Naive thymus-derived CD4-positive, alpha-beta T cell (primary cell): ENCODE measurements at regions of chr3 and their contacts with region 1.

Region 1: DNA sequence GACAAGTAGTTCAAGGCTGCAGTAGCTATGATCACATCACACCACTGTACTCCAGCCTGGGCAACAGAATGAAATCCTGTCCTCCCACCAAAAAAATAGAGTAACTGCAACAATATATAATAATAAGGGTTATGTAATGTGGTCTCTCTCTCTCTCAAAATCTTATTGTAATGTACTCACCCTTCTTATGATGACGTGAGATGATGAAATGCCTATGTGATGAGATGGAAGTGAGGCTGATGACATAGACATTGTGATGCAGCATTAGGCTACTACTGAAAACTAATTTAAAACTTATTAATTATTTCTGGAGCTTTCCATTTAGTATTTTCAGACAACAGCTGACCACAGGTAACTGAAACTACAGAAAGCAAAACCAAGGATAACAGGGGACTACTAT is 27.4 kb downstream of the TASOR start:
- DNase-seq: no peak
- ATAC-seq: no peak
- H3K4me3 ChIP-seq: no peak overlapping the region
- H3K4me3 Mint-ChIP-seq: no peak overlapping the region
- H3K27ac ChIP-seq: no peak overlapping the region
- H3K27ac Mint-ChIP-seq: peak overlapping the region in 4 of 9 donors; percentile 6 to 36 (median 28)
- H3K4me1 ChIP-seq: no peaks in the 10 kb centered on the region
- H3K4me1 Mint-ChIP-seq: peaks cover 20 to 54% (median 42%) of the 10 kb centered on the region in 7 donors
- H3K27me3 ChIP-seq: no peaks in the 10 kb centered on the region
- H3K27me3 Mint-ChIP-seq: no peaks in the 10 kb centered on the region

Region 2: DNA sequence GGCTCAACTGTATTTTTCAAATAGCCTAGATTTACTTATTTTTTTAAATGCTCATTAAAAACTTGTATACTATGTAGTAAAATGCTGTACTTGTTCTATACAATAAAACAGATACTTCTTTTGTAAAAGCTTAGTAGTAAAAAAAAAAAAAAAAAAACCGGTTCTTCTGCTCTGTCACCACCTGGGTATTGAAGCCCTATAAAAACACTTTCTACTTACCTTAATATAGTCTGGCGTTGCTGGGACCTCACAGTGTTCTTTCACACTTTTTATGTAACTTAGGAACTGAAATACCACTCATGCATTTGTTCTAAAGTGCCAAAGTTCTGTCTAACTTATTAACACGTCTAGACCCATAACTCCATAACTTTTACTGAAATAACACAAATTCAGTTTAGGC is 34.0 kb before region 1 on chr3:
- CTCF ChIA-PET with region 1: no interaction called
- POLR2A ChIA-PET with region 1: interaction called, 3 read pairs
- intact Hi-C with region 1: loop called in 1 of 2 experiments (anchors 1 kb)
- DNase-seq: no peak
- ATAC-seq: no peak
- H3K4me3 ChIP-seq: no peak overlapping the region
- H3K4me3 Mint-ChIP-seq: no peak overlapping the region
- H3K27ac ChIP-seq: no peak overlapping the region
- H3K27ac Mint-ChIP-seq: peak overlapping the region in 5 of 9 donors; percentile 29 to 84 (median 50)
- H3K4me1 ChIP-seq: no peaks in the 10 kb centered on the region
- H3K4me1 Mint-ChIP-seq: peaks cover 4 to 16% (median 9%) of the 10 kb centered on the region in 7 donors
- H3K27me3 ChIP-seq: no peaks in the 10 kb centered on the region
- H3K27me3 Mint-ChIP-seq: no peaks in the 10 kb centered on the region

Region 3: DNA sequence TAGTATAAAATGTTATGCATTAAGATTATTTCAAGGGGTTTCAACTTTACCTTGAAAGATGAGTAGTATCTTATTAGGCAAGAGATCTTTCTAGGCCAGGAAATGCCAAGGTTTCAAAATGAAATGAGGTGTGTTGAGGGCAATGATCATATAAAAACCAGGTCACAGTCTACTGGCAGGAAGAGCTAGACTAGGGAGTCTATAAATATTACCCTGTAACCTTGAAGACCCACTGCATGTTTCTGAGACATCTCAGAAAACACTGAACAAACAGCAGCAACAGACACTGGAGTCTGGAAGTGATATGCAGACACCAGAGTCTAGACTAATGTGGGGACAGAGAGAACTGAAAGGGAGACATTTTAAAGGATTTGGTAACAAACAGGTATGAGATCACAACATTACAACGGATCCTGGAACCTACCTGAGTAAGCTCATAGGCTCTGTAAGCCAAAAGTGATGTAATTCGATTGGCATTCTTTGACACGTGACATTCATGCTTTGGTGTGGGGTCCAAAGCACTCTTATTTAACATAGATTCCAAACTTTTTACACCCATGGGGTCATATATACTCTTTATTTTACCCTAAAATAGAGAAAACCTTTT is 12.4 kb after region 1 on chr3:
- CTCF ChIA-PET with region 1: no interaction called
- POLR2A ChIA-PET with region 1: interaction called, 4 read pairs
- intact Hi-C with region 1: loop called in 1 of 2 experiments (anchors 2 kb)
- DNase-seq: no peak
- ATAC-seq: no peak
- H3K4me3 ChIP-seq: no peak overlapping the region
- H3K4me3 Mint-ChIP-seq: peak overlapping the region in 2 of 10 donors; percentile 49 to 58
- H3K27ac ChIP-seq: no peak overlapping the region
- H3K27ac Mint-ChIP-seq: peak overlapping the region in 6 of 9 donors; percentile 17 to 43 (median 36)
- H3K4me1 ChIP-seq: no peaks in the 10 kb centered on the region
- H3K4me1 Mint-ChIP-seq: peaks cover 6 to 43% (median 32%) of the 10 kb centered on the region in 7 donors
- H3K27me3 ChIP-seq: no peaks in the 10 kb centered on the region
- H3K27me3 Mint-ChIP-seq: no peaks in the 10 kb centered on the region